ENCODE measurements at regions of chr3 and their contacts with region 1.

Region 1: DNA sequence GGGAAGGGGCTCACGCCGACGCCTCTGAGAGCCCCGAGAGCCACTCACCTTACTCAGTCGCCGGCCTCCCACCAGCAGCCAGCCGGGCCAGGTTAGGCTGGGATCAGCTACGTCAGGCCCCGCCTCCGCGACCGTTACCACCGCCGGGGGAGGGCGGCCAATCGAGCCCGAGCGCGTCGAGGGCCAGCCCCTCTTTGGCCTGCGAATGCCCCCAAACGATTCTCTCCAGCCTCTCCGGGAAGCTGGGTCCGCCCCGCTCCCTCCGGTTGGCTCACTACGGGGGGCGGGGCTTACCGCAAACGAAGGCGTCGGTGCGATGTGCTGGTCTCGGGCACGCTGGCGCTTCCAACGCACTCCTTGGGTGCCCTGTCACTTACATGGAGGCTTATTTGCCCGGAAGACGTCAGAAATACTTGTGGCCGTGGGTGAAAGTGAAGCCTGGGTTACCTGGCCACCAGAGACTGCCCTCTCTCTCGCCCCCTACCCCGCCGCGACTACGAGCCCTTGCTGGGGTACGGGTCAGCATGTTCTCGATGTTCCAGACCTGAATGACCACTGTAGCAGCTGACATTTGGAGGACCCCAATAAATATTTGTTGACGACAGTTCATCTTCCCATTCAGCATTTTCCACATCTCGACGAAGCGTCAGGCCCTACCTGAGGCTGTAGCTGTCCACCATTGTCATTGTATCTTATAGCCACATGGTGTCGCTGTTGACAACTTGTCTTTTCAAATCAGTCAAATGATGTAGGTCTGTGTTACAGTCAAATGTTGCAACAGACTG is at the start of gene CEP70:
- DNase-seq: peak; percentile 95
- H3K4me3 ChIP-seq: peak within 1 kb of the TSS; percentile 50 to 67
- H3K27ac ChIP-seq: peak within 1 kb of the TSS; percentile 94 to 96
- H3K4me1 ChIP-seq: no peaks in the 10 kb centered on the region
- H3K27me3 ChIP-seq: no peaks in the 10 kb centered on the region
- CTCF ChIP-seq: peak; percentile 78 to 96 (median 94)
- POLR2A ChIP-seq: peak; percentile 96
- total RNA-seq, gene CEP70: 24.1 to 38.0 TPM

Region 2: GRCh38 chr3:138186803-138187295 is 407.5 kb before region 1 on chr3:
- intact Hi-C with region 1: loop called (anchors 10 kb)
- DNase-seq: peak; percentile 88
- H3K4me3 ChIP-seq: peak overlapping the region; percentile 72 to 98
- H3K27ac ChIP-seq: peak overlapping the region; percentile 89 to 96
- H3K4me1 ChIP-seq: no peaks in the 10 kb centered on the region
- H3K27me3 ChIP-seq: no peaks in the 10 kb centered on the region
- CTCF ChIP-seq: no peak
- POLR2A ChIP-seq: no peak

Region 3: DNA sequence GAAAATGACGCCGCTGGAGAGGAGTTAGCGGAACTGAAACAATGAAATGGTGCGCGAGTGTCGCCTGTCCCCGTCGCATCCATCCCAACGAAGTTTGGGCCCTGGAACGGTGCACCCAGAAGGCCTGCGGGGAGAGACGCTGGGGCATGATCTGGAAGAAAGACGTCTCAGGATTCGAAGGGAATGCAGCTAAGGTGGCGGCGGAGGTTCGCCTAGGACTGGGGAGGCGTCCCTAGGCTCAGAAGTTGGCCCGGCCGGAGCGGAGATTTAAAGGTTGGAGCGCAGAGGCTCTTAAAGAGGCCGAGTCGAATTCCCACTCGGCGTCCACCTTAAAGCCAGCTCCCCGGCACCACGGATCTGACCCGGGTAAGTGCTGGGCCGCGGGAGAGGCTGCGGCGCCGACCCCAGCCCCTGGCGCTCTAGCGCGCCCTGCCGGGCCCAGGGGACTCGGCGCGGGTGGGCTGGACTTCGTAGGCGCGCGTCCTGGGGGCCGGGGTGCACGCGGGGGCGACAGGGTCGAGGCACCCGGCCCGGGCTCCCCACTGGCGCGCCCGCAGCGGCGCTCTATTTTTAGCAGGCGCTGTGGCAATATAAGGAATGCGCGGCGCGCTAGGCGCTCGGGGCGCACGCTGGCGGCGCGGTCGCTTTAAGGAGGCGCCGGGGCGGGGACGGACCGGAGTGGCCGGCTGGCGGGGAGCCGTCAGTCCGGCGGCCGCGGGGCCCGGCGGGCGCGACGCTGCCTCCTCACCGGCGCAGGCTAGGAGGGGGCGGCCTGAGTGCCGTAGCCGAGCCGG is 246.2 kb before region 1 on chr3 and contains the start of gene MRAS:
- intact Hi-C with region 1: loop called (anchors 10 kb)
- DNase-seq: peak; percentile 36
- H3K4me3 ChIP-seq: peak within 1 kb of the TSS; percentile 62 to 72
- H3K27ac ChIP-seq: peak within 1 kb of the TSS; percentile 84 to 85
- H3K4me1 ChIP-seq: no peaks in the 10 kb centered on the region
- H3K27me3 ChIP-seq: no peaks in the 10 kb centered on the region
- CTCF ChIP-seq: peak in 2 of 4 experiments; percentile 42 to 53
- POLR2A ChIP-seq: peak; percentile 30
- total RNA-seq, gene MRAS: 8.7 to 25.3 TPM

Region 4: GRCh38 chr3:138694287-138695007 is 100.1 kb after region 1 on chr3:
- intact Hi-C with region 1: loop called (anchors 10 kb)
- DNase-seq: no peak
- H3K4me3 ChIP-seq: no peak overlapping the region
- H3K27ac ChIP-seq: no peak overlapping the region
- H3K4me1 ChIP-seq: no peaks in the 10 kb centered on the region
- H3K27me3 ChIP-seq: no peaks in the 10 kb centered on the region
- CTCF ChIP-seq: no peak
- POLR2A ChIP-seq: no peak

Region 5: GRCh38 chr3:138915503-138916498 is 321.5 kb after region 1 on chr3:
- intact Hi-C with region 1: loop called (anchors 1 kb)
- DNase-seq: peak; percentile 95
- H3K4me3 ChIP-seq: peak overlapping the region; percentile 51 to 75
- H3K27ac ChIP-seq: peak overlapping the region; percentile 92 to 95
- H3K4me1 ChIP-seq: peaks cover 7% of the 10 kb centered on the region
- H3K27me3 ChIP-seq: no peaks in the 10 kb centered on the region
- CTCF ChIP-seq: peak; percentile 92 to 96 (median 95)
- POLR2A ChIP-seq: peak; percentile 28

Measured in prostate gland (tissue), 2 donors.